Head of caudate nucleus (tissue), 42 donors: ENCODE measurements at regions of chr11 and their contacts with region 1.

Region 1: GRCh38 chr11:119651802-119652584 is 77.0 kb downstream of the NECTIN1 start:
- DNase-seq: no peak

Region 2: DNA sequence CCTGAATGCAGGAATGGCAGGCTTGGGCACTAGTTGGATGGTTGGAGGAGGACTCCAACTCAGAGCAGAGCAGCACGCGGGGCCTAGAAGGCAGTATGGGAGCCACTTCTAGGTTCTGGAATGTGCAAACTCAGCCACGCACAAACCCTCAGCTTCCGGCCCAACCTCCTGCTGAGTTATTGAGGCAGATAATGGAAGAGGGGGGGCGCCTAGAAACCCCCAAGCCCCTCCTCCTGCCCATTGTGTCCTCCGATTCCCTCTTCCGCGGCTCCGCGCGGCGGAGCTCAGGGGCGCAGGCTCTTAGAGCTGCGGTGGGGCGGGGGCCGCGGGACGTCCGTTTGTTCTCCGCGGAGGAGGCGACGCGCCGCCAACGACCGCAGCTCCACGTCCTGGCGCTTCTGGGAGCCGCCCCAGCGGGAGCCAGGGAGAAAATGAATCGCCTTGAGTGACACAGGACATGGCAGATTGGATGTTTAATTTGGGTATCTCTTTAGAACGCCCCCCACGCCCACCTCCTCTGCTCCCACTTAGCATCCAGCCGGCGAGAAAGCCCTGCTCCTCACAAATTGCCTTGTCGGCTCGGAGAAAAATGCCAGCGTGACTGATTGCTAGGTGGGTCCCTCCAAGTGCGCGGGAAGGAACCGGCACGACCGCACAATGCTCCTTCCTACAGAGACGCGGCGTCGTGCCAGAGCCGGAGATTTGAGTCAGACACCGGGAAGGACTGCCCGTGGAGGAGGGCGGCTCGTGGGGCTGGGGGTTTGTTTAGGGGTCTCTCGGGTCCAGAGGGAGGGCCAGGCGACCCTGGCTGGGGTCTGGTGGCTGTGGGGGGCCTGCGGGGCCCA is 67.6 kb before region 1 on chr11:
- intact Hi-C with region 1: loop called (anchors 10 kb)
- DNase-seq: peak; percentile 38 to 88 (median 68)

Region 3: DNA sequence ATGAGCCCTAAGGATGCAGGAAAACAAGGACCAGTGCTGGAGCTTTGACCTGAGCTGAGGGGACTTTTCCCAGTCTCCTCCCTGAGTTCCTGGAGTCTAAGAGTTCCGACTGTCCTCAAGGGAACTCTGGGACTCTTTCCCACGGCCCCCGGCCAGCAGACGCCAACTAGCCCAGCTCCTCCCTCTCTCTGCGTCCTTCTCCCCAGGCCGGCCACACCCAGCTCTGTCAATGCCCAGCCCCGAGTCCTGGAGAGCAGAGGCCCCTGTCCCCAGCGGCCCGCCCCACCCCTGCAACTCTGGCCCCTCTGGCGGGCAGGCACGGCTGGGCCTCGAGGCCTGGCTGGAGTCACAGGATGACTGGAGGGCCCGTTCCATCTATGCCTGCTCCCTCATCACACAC is 47.2 kb after region 1 on chr11:
- intact Hi-C with region 1: no loop called
- DNase-seq: peak in 9 of 42 donors; percentile 13 to 57 (median 25)